Dendritic cell treated with granulocyte-macrophage colony-stimulating factor and Interleukin-4, amounts not matched to agents 40 ng/mL and 50 ng/mL, for 4 days (primary cell): ENCODE measurements at regions of chr11 and their contacts with region 1.

Region 1: DNA sequence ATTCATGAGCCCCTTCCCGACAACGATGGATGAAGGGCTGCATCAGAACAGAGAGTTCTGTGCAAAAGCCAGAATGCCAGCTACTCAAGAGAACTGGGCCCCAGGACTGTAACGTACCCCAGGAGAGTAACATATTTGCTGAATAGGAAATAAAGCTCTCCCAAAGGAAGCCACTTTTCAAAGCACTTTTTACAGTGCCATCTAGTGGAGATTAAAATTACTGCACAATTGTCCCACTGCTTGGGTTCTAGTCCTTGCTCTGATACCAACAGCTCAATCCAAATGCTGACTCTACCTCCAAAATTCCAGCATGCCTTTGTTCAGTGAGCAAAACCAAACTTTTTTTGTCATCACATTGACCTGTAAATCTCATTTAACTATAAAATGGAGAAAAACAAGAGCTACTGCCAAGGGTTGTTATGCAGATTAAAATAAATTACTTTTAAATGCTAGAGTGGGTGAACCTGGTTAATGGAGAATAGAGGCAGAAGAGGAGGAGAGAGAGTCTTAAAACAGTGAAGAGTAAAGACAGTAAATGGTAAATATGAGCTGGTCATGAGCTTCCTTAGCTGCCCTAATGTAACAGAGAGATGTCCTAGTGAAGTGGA is 87.6 kb upstream of the FSHB start:
- H3K4me3 Mint-ChIP-seq: no peak overlapping the region
- H3K27ac Mint-ChIP-seq: no peak overlapping the region
- H3K4me1 Mint-ChIP-seq: no peaks in the 10 kb centered on the region
- H3K27me3 Mint-ChIP-seq: no peaks in the 10 kb centered on the region

Region 2: DNA sequence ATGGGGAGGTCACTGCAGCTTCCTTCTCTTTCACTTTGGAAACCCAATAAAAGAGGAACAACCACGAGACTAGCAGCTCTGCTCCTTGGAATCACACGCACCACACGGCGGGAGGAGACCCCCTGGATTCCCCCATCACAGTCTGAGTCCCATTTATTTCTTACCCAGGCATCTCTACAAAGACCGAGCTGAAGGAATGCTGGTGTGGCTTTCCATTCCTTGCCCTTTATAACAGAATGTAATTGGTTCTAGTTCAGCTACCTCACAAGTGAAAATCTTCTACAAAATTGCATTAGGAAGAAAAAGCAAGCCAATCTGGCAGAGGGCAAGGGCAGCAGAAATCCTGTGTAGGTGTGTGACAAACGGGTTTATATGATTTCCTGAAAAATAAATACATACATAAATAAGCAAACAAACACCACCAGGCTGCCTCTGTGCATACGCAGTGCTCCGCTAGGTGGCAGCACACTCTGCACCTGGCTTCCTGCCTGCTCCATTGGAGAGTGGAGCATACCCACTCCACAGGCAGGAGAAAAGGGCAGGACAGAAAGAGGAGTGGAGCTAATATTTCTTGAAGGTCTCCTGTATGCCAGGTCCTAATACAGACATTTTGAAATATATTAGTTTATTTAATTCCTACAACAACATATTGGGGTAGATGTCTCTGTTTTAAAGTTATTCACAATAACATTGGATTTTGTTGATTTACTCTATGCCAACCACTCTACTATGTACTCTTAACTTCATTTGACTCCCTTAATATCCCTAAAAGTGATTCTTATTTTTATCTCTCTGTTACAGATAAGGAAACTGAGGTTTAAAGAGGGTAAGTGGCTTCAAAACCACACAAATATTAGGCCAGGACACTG is 799.5 kb before region 1 on chr11:
- intact Hi-C with region 1: loop called (anchors 2 kb)
- H3K4me3 Mint-ChIP-seq: no peak overlapping the region
- H3K27ac Mint-ChIP-seq: no peak overlapping the region
- H3K4me1 Mint-ChIP-seq: no peaks in the 10 kb centered on the region
- H3K27me3 Mint-ChIP-seq: no peaks in the 10 kb centered on the region

Region 3: GRCh38 chr11:29432719-29433325 is 710.4 kb before region 1 on chr11:
- intact Hi-C with region 1: loop called (anchors 1 kb)
- H3K4me3 Mint-ChIP-seq: no peak overlapping the region
- H3K27ac Mint-ChIP-seq: no peak overlapping the region
- H3K4me1 Mint-ChIP-seq: no peaks in the 10 kb centered on the region
- H3K27me3 Mint-ChIP-seq: no peaks in the 10 kb centered on the region

Region 4: DNA sequence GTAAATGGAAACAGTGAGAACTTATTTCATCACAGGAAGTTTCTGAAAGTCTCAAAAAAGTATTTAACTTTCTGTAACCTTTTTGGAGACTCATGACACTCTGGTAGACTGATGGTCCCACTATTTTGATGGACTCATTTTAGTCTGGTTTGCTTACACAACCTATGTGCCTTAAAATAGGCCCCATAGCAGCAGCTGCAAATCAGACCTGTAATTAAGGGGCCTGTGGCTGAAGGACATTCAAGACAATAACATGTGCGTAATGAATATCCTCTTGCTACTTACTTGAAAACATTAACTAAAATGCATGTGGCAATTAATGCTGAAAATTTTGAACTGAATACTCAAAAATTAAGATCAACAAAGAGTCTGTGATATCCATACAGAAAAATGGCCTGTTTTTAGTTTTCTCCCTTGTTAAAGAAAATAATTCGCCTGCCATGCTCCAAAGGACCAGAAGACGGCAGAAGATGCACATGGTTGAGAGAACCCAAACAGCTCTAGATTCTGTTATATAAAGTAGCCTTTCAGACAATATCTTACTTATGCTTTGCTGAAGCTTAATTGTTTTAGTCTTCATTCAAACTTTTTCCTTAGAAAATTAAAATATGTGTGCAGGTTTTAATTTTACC is 694.8 kb before region 1 on chr11:
- intact Hi-C with region 1: loop called (anchors 1 kb)
- H3K4me3 Mint-ChIP-seq: no peak overlapping the region
- H3K27ac Mint-ChIP-seq: no peak overlapping the region
- H3K4me1 Mint-ChIP-seq: no peaks in the 10 kb centered on the region
- H3K27me3 Mint-ChIP-seq: no peaks in the 10 kb centered on the region